ENCODE measurements at regions of chr14 and their contacts with region 1.

Region 1: DNA sequence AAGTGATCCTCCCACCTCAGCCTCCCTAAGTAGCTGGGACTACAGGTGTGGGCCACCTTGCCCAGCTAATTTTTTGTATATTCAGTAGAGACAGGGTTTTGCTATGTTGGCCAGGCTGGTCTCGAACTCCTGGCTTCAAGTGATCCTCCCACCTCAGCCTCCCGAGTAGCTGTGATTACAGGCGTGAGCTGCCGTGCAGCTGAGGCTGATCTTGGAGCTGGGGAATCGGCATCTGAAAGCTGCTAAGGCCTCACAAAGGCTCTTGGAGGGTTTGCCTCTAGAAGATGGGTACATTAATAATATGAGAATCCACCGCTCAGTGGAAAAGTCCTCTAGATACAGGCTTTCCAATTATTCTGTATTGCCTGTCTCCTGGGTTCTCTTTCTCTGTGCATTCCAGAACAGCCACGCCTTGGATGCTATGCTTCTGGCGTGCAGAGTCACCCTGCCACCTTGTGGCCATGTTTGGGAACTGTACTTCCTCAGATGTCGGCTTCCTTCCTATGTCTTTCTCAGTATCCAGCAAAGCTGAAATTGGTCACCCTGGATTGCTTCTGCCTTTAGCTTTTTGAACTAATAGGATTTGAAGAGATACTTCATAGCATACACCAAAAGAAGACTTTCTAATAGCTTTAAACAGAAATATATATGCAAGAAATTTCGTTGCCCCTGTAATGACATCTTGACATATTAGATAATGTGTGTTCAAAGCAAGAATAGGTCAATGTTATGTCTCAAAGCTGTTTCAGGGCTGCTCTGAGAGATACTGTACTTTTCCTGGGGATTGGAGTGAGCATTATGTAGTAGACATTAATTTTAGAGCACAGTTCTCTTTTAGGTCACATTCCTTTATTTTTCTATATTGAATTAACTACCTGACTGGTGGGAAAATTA is 75.4 kb downstream of the SNAPC1 start:
- DNase-seq: peak; percentile 39 to 86
- H3K4me3 ChIP-seq: no peak overlapping the region
- H3K27ac ChIP-seq: no peak overlapping the region
- H3K4me1 ChIP-seq: peaks cover 0 to 4% (median 2%) of the 10 kb centered on the region in 4 experiments; a peak in 4 of 7 replicates
- H3K27me3 ChIP-seq: no peaks in the 10 kb centered on the region; a peak in 1 of 7 replicates
- CTCF ChIP-seq: peak; percentile 91 to 96 (median 93)
- EP300 ChIP-seq: no peak
- POLR2A ChIP-seq: no peak
- RAD21 ChIP-seq: peak; percentile 97 to 98

Region 2: GRCh38 chr14:61461808-61462275 is 375.7 kb before region 1 on chr14:
- CTCF ChIA-PET with region 1: interaction called, 40 read pairs
- POLR2A ChIA-PET with region 1: interaction called, 4 read pairs
- DNase-seq: peak in 1 of 2 experiments; percentile 43
- H3K4me3 ChIP-seq: no peak overlapping the region
- H3K27ac ChIP-seq: no peak overlapping the region
- H3K4me1 ChIP-seq: peaks cover under 1 to 13% (median 8%) of the 10 kb centered on the region in 4 experiments
- H3K27me3 ChIP-seq: no peaks in the 10 kb centered on the region
- CTCF ChIP-seq: peak in 2 of 3 experiments; percentile 64 to 69; a peak in 3 of 4 replicates
- EP300 ChIP-seq: no peak
- POLR2A ChIP-seq: no peak
- RAD21 ChIP-seq: peak; percentile 88 to 92

Region 3: DNA sequence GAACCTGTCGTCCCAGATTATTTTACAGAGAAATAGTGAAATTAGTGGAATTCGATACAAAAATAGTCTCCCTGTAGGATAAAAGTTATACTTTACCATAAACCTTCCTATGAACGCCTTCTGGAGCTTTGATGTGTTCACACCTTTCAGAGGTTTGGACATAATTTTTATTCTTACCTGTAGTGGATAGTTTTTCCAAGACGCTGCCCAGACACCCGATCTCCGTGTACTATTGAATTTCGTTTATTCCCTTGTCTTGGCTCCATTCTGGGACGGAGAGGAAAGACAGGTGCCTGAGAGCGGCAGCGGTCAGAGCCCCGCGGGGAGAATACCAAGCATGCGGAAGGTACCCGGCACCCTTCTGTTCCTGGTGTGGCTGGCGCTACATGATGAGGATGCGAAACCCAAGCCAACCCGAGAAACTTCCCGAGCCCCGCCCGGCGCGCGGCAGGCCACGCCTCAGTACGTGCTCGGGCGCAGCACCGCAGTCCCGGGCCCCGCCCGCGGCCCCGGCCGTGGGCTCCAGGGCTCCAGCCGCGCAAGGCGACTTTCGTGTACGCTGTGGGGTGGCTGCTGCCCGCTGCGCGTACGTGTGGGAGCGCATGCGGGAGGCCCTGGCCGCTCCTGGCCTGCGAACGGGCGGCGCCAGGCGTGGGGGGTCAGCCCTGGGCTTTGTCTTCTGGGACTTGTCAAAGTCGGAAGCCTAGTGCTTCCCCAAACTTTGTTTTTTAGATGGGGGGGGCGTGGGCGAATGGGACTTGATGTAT is 86.7 kb before region 1 on chr14:
- CTCF ChIA-PET with region 1: interaction called, 12 read pairs
- POLR2A ChIA-PET with region 1: no interaction called
- DNase-seq: peak; percentile 53 to 87
- H3K4me3 ChIP-seq: peak overlapping the region; percentile 41 to 66 (median 45)
- H3K27ac ChIP-seq: peak overlapping the region; percentile 32; the same call in 1 of the 2 replicates
- H3K4me1 ChIP-seq: peaks cover 0 to 5% (median 4%) of the 10 kb centered on the region in 4 experiments; a peak in 2 of 7 replicates
- H3K27me3 ChIP-seq: no peaks in the 10 kb centered on the region
- CTCF ChIP-seq: no peak
- EP300 ChIP-seq: peak in 1 of 2 experiments; percentile 58; a peak in 1 of 3 replicates
- POLR2A ChIP-seq: peak in 1 of 2 experiments; percentile 70; a peak in 2 of 3 replicates
- RAD21 ChIP-seq: no peak

Region 4: GRCh38 chr14:61768240-61768639 is 69.3 kb before region 1 on chr14:
- CTCF ChIA-PET with region 1: interaction called, 12 read pairs
- POLR2A ChIA-PET with region 1: no interaction called
- DNase-seq: no peak
- H3K4me3 ChIP-seq: no peak overlapping the region
- H3K27ac ChIP-seq: no peak overlapping the region
- H3K4me1 ChIP-seq: peaks cover 0 to 6% (median 4%) of the 10 kb centered on the region in 4 experiments; a peak in 3 of 7 replicates
- H3K27me3 ChIP-seq: no peaks in the 10 kb centered on the region
- CTCF ChIP-seq: no peak
- EP300 ChIP-seq: no peak
- POLR2A ChIP-seq: no peak
- RAD21 ChIP-seq: no peak

Region 5: DNA sequence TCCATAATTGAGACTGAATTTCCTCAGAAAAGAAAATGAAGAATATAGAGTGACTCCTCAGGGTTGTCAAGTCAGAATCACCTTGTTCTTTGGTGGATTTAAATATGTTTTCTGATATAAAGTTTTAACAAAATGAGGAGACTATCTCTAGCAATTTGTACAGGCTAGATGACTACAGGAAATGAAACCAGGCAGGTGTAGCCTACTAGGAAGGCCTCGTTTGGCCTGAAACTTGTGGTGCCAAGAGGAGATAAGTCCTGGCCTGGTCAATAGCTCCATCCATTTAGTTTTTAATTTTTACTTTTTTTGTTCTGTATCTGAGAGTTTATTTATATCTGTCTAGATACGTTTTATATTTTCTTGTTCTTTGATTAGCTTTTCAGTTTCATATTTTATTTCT is 33.8 kb before region 1 on chr14:
- CTCF ChIA-PET with region 1: interaction called, 20 read pairs
- POLR2A ChIA-PET with region 1: no interaction called
- DNase-seq: no peak
- H3K4me3 ChIP-seq: no peak overlapping the region
- H3K27ac ChIP-seq: no peak overlapping the region
- H3K4me1 ChIP-seq: no peaks in the 10 kb centered on the region; a peak in 1 of 7 replicates
- H3K27me3 ChIP-seq: no peaks in the 10 kb centered on the region
- CTCF ChIP-seq: no peak
- EP300 ChIP-seq: no peak
- POLR2A ChIP-seq: no peak
- RAD21 ChIP-seq: no peak

Region 6: DNA sequence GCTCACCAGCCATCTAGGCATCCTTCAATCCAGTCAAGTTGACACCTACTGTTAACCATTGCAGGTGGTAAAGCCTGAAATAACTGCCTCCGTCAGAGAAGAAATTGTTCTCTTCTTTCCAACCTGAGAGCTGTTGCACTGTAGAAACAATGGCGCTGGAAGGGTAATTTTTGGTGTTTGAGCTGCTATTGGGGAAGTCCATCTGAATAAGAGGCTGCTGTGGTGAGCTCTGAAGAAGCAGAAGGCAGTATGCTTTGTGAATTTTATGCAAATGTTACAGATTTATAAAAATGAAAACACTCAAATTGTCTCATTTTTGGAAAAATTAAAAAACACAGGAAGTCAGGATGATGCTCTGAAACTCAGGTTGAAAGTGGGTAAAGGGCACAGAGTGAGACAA is 15.1 kb before region 1 on chr14:
- CTCF ChIA-PET with region 1: interaction called, 10 read pairs
- POLR2A ChIA-PET with region 1: no interaction called
- DNase-seq: no peak
- H3K4me3 ChIP-seq: no peak overlapping the region
- H3K27ac ChIP-seq: no peak overlapping the region
- H3K4me1 ChIP-seq: no peaks in the 10 kb centered on the region
- H3K27me3 ChIP-seq: no peaks in the 10 kb centered on the region
- CTCF ChIP-seq: no peak
- EP300 ChIP-seq: no peak
- POLR2A ChIP-seq: no peak
- RAD21 ChIP-seq: no peak

Region 7: GRCh38 chr14:62126879-62127478 is 289.4 kb after region 1 on chr14:
- CTCF ChIA-PET with region 1: interaction called, 17 read pairs
- POLR2A ChIA-PET with region 1: no interaction called
- DNase-seq: no peak
- H3K4me3 ChIP-seq: no peak overlapping the region
- H3K27ac ChIP-seq: no peak overlapping the region
- H3K4me1 ChIP-seq: no peaks in the 10 kb centered on the region
- H3K27me3 ChIP-seq: no peaks in the 10 kb centered on the region
- CTCF ChIP-seq: peak in 2 of 3 experiments; percentile 64 to 72; a peak in 2 of 4 replicates
- EP300 ChIP-seq: no peak
- POLR2A ChIP-seq: no peak
- RAD21 ChIP-seq: peak; percentile 90 to 92